ENCODE measurements at regions of chr15 and their contacts with region 1.

Region 1: DNA sequence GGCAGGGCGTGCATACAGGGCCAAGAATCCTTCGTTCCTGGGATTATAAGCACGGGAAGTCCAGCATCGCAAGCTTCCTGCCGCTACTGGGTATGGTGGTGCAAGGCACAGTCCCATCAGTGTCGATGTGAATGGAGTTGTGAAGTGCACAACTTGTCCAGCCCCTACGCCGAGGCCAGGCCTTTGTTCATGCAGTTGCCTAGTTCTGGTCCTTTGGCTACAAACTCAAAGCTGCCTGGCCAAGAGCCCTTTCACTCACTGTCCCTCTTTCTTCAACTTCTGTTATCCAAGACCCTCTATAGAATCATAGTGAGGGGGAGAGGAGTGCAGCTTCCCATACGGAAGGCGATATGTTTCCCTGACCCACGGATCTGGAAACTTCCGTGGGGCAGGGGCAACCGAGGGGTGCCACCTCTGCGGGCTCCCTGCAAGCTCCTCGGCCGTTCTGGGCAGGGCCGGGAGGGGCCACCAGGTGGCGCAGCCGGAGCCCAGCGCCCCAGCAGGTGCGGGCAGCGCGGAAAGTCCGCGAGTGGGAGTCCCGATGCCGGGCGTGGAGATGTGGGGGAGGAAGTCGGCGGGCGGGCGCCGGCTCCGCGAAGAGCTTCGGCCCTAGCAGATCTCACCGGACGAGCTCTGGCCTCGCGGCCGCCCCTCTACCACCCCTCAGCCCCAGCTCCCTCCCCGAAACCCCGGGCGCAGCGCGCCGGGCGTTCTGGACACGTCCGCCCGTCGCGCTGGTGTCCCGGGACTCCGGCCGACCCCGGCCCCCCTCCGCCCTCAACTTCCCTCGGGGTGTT is 693 bp downstream of the RASGRP1 start:
- DNase-seq: peak; percentile 82 to 89 (median 84)
- H3K4me3 ChIP-seq: peak overlapping the region; percentile 95 to 97
- H3K4me3 Mint-ChIP-seq: peak overlapping the region; percentile 94 to 99 (median 98)
- H3K27ac ChIP-seq: peak overlapping the region; percentile 89
- H3K27ac Mint-ChIP-seq: peak overlapping the region; percentile 79 to 97 (median 95)
- H3K4me1 ChIP-seq: peaks cover 64% of the 10 kb centered on the region
- H3K4me1 Mint-ChIP-seq: peaks cover 44 to 78% (median 60%) of the 10 kb centered on the region in 4 donors
- H3K27me3 ChIP-seq: no peaks in the 10 kb centered on the region
- H3K27me3 Mint-ChIP-seq: no peaks in the 10 kb centered on the region

Region 2: DNA sequence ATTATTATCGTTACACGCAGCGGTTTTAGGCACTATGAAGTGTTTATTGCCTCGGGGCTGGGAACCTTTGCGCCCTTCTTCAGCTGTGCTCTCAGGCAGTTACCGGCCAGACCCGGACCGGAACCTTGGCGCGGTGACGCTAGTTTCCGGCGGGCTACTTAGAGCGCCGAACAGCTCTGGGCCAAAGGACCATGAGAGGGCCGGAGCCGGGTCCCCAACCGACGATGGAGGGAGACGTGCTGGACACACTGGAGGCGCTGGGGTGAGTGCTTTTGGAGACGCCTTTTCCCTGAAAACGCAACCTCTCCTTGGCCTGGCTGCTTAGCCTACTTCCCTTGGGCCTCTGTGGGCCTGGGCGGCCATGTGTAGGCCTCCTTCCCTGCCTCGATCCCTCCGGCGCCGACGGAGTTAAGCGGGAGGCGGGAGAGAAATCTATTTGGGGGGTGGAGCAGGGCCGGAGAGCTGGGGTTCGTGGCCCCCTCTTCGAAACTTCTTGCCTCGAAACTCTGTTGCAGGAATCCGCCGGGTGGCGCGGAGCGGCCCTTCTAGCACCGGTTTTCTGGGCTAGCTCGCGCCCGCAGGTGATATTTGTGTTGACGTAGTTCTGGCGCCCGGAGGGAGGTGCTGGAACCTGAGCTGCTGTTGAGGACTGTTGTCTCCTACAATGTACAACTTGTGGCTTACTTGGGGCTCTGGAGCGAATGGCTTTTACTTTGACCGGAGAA is 109.8 kb before region 1 on chr15 and contains the start of gene FAM98B:
- CTCF ChIA-PET with region 1: interaction called, 12 read pairs
- POLR2A ChIA-PET with region 1: interaction called, 9 read pairs
- intact Hi-C with region 1: no loop called
- DNase-seq: peak; percentile 80 to 88 (median 84)
- H3K4me3 ChIP-seq: peak within 1 kb of the TSS; percentile 88 to 95
- H3K4me3 Mint-ChIP-seq: peak within 1 kb of the TSS; percentile 95 to 99 (median 97)
- H3K27ac ChIP-seq: peak within 1 kb of the TSS; percentile 74
- H3K27ac Mint-ChIP-seq: peak within 1 kb of the TSS; percentile 94 to 98 (median 96)
- H3K4me1 ChIP-seq: peaks cover 23% of the 10 kb centered on the region
- H3K4me1 Mint-ChIP-seq: peaks cover 26 to 39% (median 32%) of the 10 kb centered on the region in 4 donors
- H3K27me3 ChIP-seq: no peaks in the 10 kb centered on the region
- H3K27me3 Mint-ChIP-seq: no peaks in the 10 kb centered on the region
- total RNA-seq, gene FAM98B: 22.0 to 26.3 TPM

Region 3: GRCh38 chr15:38490242-38490922 is 73.5 kb before region 1 on chr15:
- CTCF ChIA-PET with region 1: interaction called, 8 read pairs
- POLR2A ChIA-PET with region 1: interaction called, 6 read pairs
- intact Hi-C with region 1: loop called (anchors 5 kb)
- DNase-seq: no peak
- H3K4me3 ChIP-seq: no peak overlapping the region
- H3K4me3 Mint-ChIP-seq: peak overlapping the region in 1 of 8 donors; percentile 2
- H3K27ac ChIP-seq: no peak overlapping the region
- H3K27ac Mint-ChIP-seq: peak overlapping the region; percentile 8 to 92 (median 64)
- H3K4me1 ChIP-seq: peaks cover 29% of the 10 kb centered on the region
- H3K4me1 Mint-ChIP-seq: peaks cover 28 to 34% (median 33%) of the 10 kb centered on the region in 4 donors
- H3K27me3 ChIP-seq: no peaks in the 10 kb centered on the region
- H3K27me3 Mint-ChIP-seq: no peaks in the 10 kb centered on the region

Region 4: DNA sequence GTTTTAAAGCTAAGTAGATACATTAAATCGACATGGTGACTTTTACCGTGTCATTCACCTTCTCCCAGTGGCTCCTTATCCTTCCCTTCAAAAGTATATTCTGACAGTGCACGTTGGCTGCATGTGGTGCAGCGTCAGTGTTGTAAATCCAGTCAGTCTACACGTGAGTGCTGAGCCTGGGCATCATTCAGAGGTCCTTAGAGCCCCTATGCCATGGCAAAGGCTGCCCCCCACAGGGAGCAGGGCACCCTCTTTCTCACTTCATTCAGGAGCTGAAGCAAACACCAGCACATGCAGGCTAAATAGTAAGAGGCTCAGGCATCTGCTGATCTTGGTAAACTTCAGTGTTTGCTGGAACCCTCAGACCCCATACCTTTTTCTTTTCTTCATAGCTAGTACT is 42.6 kb before region 1 on chr15:
- CTCF ChIA-PET with region 1: interaction called, 9 read pairs
- POLR2A ChIA-PET with region 1: interaction called, 14 read pairs
- intact Hi-C with region 1: loop called (anchors 5 kb)
- DNase-seq: no peak
- H3K4me3 ChIP-seq: no peak overlapping the region
- H3K4me3 Mint-ChIP-seq: no peak overlapping the region
- H3K27ac ChIP-seq: no peak overlapping the region
- H3K27ac Mint-ChIP-seq: peak overlapping the region; percentile 57 to 87 (median 78)
- H3K4me1 ChIP-seq: peaks cover 39% of the 10 kb centered on the region
- H3K4me1 Mint-ChIP-seq: peaks cover 41 to 61% (median 51%) of the 10 kb centered on the region in 4 donors
- H3K27me3 ChIP-seq: no peaks in the 10 kb centered on the region
- H3K27me3 Mint-ChIP-seq: no peaks in the 10 kb centered on the region

Region 5: DNA sequence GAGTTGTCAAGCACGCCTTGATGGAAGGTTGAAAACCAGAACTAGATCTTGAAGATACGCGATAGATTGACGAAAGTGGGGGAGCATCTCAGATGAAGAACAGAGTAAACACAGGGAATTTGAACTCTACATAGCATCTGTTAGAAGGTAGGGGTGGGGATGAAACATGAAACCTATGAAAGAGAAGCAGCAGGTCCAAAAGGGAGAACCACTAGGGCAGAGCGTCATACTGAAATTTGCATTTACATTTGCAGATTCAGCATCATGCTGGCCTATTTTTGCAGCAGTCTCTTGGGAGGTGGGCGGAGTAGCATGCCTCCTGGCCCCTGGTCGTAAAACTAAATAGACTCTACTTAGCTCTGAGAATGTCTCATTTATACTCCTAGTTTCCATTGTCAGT is 46.8 kb after region 1 on chr15:
- CTCF ChIA-PET with region 1: interaction called, 27 read pairs
- POLR2A ChIA-PET with region 1: interaction called, 13 read pairs
- intact Hi-C with region 1: no loop called
- DNase-seq: peak; percentile 38 to 74 (median 49)
- H3K4me3 ChIP-seq: no peak overlapping the region
- H3K4me3 Mint-ChIP-seq: peak overlapping the region in 7 of 8 donors; percentile 2 to 82 (median 55)
- H3K27ac ChIP-seq: peak overlapping the region; percentile 33
- H3K27ac Mint-ChIP-seq: peak overlapping the region; percentile 66 to 95 (median 90)
- H3K4me1 ChIP-seq: peaks cover 48% of the 10 kb centered on the region
- H3K4me1 Mint-ChIP-seq: peaks cover 34 to 62% (median 52%) of the 10 kb centered on the region in 4 donors
- H3K27me3 ChIP-seq: no peaks in the 10 kb centered on the region
- H3K27me3 Mint-ChIP-seq: no peaks in the 10 kb centered on the region

Region 6: GRCh38 chr15:38647683-38648082 is 83.8 kb after region 1 on chr15:
- CTCF ChIA-PET with region 1: interaction called, 252 read pairs
- POLR2A ChIA-PET with region 1: interaction called, 349 read pairs
- intact Hi-C with region 1: loop called (anchors 1 kb)
- DNase-seq: no peak
- H3K4me3 ChIP-seq: no peak overlapping the region
- H3K4me3 Mint-ChIP-seq: peak overlapping the region in 2 of 8 donors; percentile 6 to 52
- H3K27ac ChIP-seq: peak overlapping the region; percentile 4
- H3K27ac Mint-ChIP-seq: peak overlapping the region; percentile 70 to 96 (median 91)
- H3K4me1 ChIP-seq: peaks cover 81% of the 10 kb centered on the region
- H3K4me1 Mint-ChIP-seq: peaks cover 55 to 78% (median 68%) of the 10 kb centered on the region in 4 donors
- H3K27me3 ChIP-seq: no peaks in the 10 kb centered on the region
- H3K27me3 Mint-ChIP-seq: no peaks in the 10 kb centered on the region

Region 7: GRCh38 chr15:38678246-38678645 is 114.3 kb after region 1 on chr15:
- CTCF ChIA-PET with region 1: interaction called, 717 read pairs
- POLR2A ChIA-PET with region 1: interaction called, 452 read pairs
- intact Hi-C with region 1: loop called (anchors 1 kb)
- DNase-seq: no peak
- H3K4me3 ChIP-seq: no peak overlapping the region
- H3K4me3 Mint-ChIP-seq: peak overlapping the region in 1 of 8 donors; percentile 36
- H3K27ac ChIP-seq: no peak overlapping the region
- H3K27ac Mint-ChIP-seq: no peak overlapping the region
- H3K4me1 ChIP-seq: peaks cover 29% of the 10 kb centered on the region
- H3K4me1 Mint-ChIP-seq: peaks cover 29 to 45% (median 36%) of the 10 kb centered on the region in 4 donors
- H3K27me3 ChIP-seq: no peaks in the 10 kb centered on the region
- H3K27me3 Mint-ChIP-seq: no peaks in the 10 kb centered on the region

Region 8: GRCh38 chr15:38758043-38758442 is 194.1 kb after region 1 on chr15:
- CTCF ChIA-PET with region 1: no interaction called
- POLR2A ChIA-PET with region 1: no interaction called
- intact Hi-C with region 1: no loop called
- DNase-seq: no peak
- H3K4me3 ChIP-seq: no peak overlapping the region
- H3K4me3 Mint-ChIP-seq: no peak overlapping the region
- H3K27ac ChIP-seq: no peak overlapping the region
- H3K27ac Mint-ChIP-seq: no peak overlapping the region
- H3K4me1 ChIP-seq: no peaks in the 10 kb centered on the region
- H3K4me1 Mint-ChIP-seq: no peaks in the 10 kb centered on the region
- H3K27me3 ChIP-seq: no peaks in the 10 kb centered on the region
- H3K27me3 Mint-ChIP-seq: peaks cover 4 to 6% of the 10 kb centered on the region in 2 donors